Gastrocnemius medialis (tissue), 4 donors: ENCODE measurements at regions of chr18 and their contacts with region 1.

Region 1: GRCh38 chr18:63320046-63320689 is 599 bp upstream of the BCL2 start:
- DNase-seq: peak; percentile 74 to 81
- ATAC-seq: peak; percentile 77 to 78
- H3K4me3 ChIP-seq: peak overlapping the region; percentile 49 to 81 (median 64)
- H3K27ac ChIP-seq: peak overlapping the region; percentile 83 to 86 (median 84)
- H3K4me1 ChIP-seq: peaks cover 10 to 32% of the 10 kb centered on the region in 2 donors
- H3K27me3 ChIP-seq: no peaks in the 10 kb centered on the region
- CTCF ChIP-seq: peak in 2 of 5 experiments; percentile 29 to 31
- POLR2A ChIP-seq: peak in 1 of 2 donors; percentile 28

Region 2: DNA sequence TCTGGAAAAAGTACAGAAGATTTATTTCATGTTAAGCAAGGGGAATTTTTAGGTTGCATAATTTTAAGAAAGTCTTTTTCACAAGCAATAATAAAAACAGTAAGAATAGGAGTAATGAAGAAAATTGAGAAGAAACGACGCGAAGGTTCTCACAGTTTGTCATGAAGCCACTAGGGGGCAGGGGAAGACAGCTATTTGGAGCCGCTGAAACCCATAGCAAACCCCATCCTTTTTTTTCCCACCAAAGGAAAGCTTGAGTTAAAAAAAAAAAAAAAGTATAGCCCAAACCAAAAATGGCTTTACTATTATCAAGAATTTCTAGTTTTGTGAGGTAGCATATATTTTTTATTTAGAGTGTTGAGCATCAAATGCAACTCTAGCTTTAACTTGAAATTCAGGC is 303.9 kb before region 1 on chr18:
- in situ Hi-C with region 1: loop called in 3 of 4 experiments (anchors 5 to 10 kb)
- intact Hi-C with region 1: loop called (anchors 1 kb)
- DNase-seq: peak in 1 of 2 donors; percentile 12
- ATAC-seq: peak; percentile 66 to 69
- H3K4me3 ChIP-seq: no peak overlapping the region
- H3K27ac ChIP-seq: no peak overlapping the region
- H3K4me1 ChIP-seq: no peaks in the 10 kb centered on the region
- H3K27me3 ChIP-seq: no peaks in the 10 kb centered on the region
- CTCF ChIP-seq: peak; percentile 43 to 78 (median 70)
- POLR2A ChIP-seq: no peak

Region 3: DNA sequence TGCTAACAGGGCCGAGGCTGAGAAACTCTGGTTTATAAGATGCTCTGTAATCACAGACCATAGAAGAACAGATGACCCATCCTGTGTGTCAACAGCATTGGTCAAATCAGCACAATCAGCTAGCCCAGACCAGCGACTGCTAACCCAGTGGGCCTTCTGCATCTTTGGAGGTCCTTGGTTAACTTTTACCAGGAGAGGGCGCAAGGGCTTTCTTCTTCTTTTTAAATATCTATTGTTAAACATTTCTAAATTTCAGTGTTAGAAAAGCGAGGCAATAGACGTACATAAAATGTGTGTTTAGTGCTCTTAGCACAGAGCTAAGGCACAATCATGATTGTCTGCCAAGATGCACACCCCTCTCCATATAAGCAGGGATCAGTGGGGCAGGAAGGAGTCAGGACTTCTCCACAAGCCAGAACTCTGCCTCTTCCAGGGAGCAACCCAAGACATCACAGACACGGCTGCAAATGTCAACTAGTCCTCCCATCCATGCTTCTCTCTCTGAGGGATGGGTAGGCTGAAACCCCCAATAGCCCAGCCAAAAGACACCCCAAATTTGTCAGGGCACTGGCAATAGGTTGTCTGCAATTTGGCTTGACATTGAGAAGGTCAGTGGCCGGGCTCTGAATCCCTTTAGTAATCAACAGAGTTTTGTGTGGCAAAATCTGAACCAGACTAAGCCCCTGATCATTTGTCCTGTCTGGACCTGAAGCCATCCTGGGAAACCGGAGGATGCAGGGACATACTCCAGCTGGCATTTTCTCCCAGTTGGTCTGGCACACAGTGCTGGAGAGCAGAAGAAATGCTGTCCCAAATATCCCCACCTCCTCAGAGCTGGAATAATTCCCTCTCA is 188.8 kb before region 1 on chr18:
- in situ Hi-C with region 1: loop called (anchors 5 to 10 kb)
- intact Hi-C with region 1: loop called (anchors 1 kb)
- DNase-seq: peak; percentile 27 to 33
- ATAC-seq: peak; percentile 50 to 59
- H3K4me3 ChIP-seq: no peak overlapping the region
- H3K27ac ChIP-seq: peak overlapping the region; percentile 24 to 55 (median 48)
- H3K4me1 ChIP-seq: peaks cover 18 to 23% of the 10 kb centered on the region in 2 donors
- H3K27me3 ChIP-seq: no peaks in the 10 kb centered on the region
- CTCF ChIP-seq: peak; percentile 48 to 69 (median 63)
- POLR2A ChIP-seq: no peak

Region 4: GRCh38 chr18:63262369-63263335 is 57.5 kb before region 1 on chr18:
- in situ Hi-C with region 1: loop called in 1 of 4 experiments (anchors 10 kb)
- intact Hi-C with region 1: loop called (anchors 2 kb)
- DNase-seq: peak; percentile 56 to 72
- ATAC-seq: peak; percentile 67 to 80
- H3K4me3 ChIP-seq: peak overlapping the region in 3 of 4 donors; percentile 10 to 31 (median 16)
- H3K27ac ChIP-seq: peak overlapping the region; percentile 69 to 84 (median 82)
- H3K4me1 ChIP-seq: peaks cover 54 to 61% of the 10 kb centered on the region in 2 donors
- H3K27me3 ChIP-seq: no peaks in the 10 kb centered on the region
- CTCF ChIP-seq: peak in 3 of 5 experiments; percentile 7 to 26 (median 14)
- POLR2A ChIP-seq: peak in 1 of 2 donors; percentile 24

Region 5: GRCh38 chr18:63292831-63293683 is 27.1 kb before region 1 on chr18:
- in situ Hi-C with region 1: no loop called
- intact Hi-C with region 1: loop called (anchors 2 kb)
- DNase-seq: peak; percentile 61 to 79
- ATAC-seq: peak; percentile 88 to 89
- H3K4me3 ChIP-seq: peak overlapping the region; percentile 19 to 40 (median 36)
- H3K27ac ChIP-seq: peak overlapping the region; percentile 77 to 86 (median 78)
- H3K4me1 ChIP-seq: peaks cover 46 to 63% of the 10 kb centered on the region in 2 donors
- H3K27me3 ChIP-seq: no peaks in the 10 kb centered on the region
- CTCF ChIP-seq: no peak
- POLR2A ChIP-seq: no peak

Region 6: DNA sequence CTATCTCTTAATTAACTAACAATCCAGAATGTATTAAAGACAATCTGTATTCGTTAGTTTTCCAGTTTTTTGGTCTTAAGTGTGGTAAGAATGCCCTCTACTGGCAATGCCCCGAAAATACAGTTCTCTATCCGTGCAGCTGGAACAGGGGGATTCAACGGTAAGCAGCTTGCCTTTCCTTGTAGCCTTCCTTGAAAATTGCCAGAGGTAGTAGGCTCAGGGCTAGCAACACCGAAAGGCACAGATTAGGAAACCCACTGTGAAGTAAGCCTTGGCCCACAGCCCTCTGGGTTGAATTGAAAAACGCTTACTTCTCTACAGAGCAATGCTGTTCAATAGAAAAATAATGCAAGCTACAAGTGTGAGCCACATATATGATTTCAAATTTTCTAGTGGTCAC is 119.2 kb after region 1 on chr18:
- in situ Hi-C with region 1: loop called in 1 of 4 experiments (anchors 25 kb)
- intact Hi-C with region 1: loop called (anchors 5 kb)
- DNase-seq: peak; percentile 10 to 33
- ATAC-seq: peak; percentile 68 to 80
- H3K4me3 ChIP-seq: no peak overlapping the region
- H3K27ac ChIP-seq: no peak overlapping the region
- H3K4me1 ChIP-seq: peaks cover 3 to 5% of the 10 kb centered on the region in 2 donors
- H3K27me3 ChIP-seq: no peaks in the 10 kb centered on the region
- CTCF ChIP-seq: peak; percentile 64 to 77 (median 67)
- POLR2A ChIP-seq: no peak

Region 7: GRCh38 chr18:63951302-63951705 is 631.1 kb after region 1 on chr18:
- in situ Hi-C with region 1: no loop called
- intact Hi-C with region 1: no loop called
- DNase-seq: no peak
- ATAC-seq: no peak
- H3K4me3 ChIP-seq: no peak overlapping the region
- H3K27ac ChIP-seq: no peak overlapping the region
- H3K4me1 ChIP-seq: no peaks in the 10 kb centered on the region
- H3K27me3 ChIP-seq: peaks cover 0 to 6% (median 4%) of the 10 kb centered on the region in 3 donors
- CTCF ChIP-seq: no peak
- POLR2A ChIP-seq: no peak